Activated CD4-positive, alpha-beta T cell treated with anti-CD3 and anti-CD28 coated beads for 36 hours (primary cell): ENCODE measurements at regions of chr11 and their contacts with region 1.

Region 1: DNA sequence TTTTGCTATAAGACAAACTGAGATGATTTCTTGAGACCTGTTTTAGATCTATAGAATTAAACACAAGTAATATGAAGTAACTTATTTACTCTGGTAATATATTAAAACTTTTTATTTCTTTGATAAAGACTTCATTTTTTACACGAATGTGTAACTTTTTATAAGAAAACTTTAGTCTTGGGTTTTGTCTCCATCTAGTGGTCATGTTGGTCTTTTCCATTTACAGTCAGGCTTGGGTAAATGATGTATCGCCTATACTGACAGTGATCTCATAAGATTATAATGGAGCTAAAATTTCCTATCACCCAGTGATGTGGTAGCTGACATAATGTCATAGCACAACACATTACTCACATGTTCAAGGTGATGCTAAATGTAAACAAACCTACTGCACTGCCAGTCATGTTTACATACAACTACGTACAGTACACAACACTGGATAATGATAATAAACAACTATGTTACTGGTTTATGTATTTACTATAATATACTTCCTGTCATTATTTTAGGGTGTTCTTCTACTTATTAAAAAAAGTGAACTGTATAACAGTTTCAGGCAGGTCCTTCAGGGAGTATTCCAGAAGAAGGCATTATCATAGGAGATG is 7.5 kb upstream of the C11orf97 start:
- DNase-seq: no peak
- ATAC-seq: peak; percentile 72
- H3K4me3 Mint-ChIP-seq: no peak overlapping the region
- H3K27ac Mint-ChIP-seq: no peak overlapping the region
- H3K4me1 Mint-ChIP-seq: no peaks in the 10 kb centered on the region
- H3K27me3 Mint-ChIP-seq: peaks cover 3% of the 10 kb centered on the region

Region 2: DNA sequence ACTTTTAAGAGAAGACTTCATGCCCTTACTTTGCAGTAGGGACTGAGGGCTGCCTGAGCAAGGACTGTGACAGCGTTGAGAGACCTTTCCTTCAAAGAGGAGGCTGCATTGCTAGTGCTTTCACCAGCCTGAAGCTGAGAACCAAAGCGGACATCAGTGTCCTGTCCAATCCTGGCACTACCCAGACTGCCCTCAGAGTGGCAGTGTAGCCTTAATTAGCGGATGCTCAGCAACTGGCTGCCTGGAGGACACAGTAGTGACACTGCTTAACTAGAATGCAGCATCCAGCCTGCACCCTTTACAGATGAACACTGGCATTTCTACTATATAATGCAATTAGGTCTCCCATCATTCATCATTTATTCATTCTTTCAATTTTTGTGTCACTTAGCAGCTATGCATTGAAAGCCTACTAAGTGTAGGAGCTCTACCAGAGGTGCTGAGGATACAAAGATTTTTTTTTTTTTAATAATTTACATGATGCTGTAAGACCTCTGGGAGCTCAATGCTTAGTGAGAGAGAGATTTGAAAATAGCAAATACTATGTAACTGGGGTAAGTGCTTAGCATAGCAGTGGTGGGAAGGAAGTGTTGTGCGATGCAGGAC is 1270.1 kb before region 1 on chr11:
- CTCF ChIA-PET with region 1: no interaction called
- POLR2A ChIA-PET with region 1: no interaction called
- intact Hi-C with region 1: loop called in 1 of 2 experiments (anchors 2 kb)
- DNase-seq: peak; percentile 82
- ATAC-seq: peak; percentile 99
- H3K4me3 Mint-ChIP-seq: no peak overlapping the region
- H3K27ac Mint-ChIP-seq: no peak overlapping the region
- H3K4me1 Mint-ChIP-seq: no peaks in the 10 kb centered on the region
- H3K27me3 Mint-ChIP-seq: peaks cover 9% of the 10 kb centered on the region

Region 3: GRCh38 chr11:93921695-93922468 is 582.9 kb before region 1 on chr11:
- CTCF ChIA-PET with region 1: interaction called, 8 read pairs
- POLR2A ChIA-PET with region 1: no interaction called
- intact Hi-C with region 1: loop called (anchors 1 to 10 kb)
- DNase-seq: peak; percentile 49
- ATAC-seq: peak; percentile 53
- H3K4me3 Mint-ChIP-seq: no peak overlapping the region
- H3K27ac Mint-ChIP-seq: no peak overlapping the region
- H3K4me1 Mint-ChIP-seq: no peaks in the 10 kb centered on the region
- H3K27me3 Mint-ChIP-seq: peaks cover 38% of the 10 kb centered on the region

Region 4: DNA sequence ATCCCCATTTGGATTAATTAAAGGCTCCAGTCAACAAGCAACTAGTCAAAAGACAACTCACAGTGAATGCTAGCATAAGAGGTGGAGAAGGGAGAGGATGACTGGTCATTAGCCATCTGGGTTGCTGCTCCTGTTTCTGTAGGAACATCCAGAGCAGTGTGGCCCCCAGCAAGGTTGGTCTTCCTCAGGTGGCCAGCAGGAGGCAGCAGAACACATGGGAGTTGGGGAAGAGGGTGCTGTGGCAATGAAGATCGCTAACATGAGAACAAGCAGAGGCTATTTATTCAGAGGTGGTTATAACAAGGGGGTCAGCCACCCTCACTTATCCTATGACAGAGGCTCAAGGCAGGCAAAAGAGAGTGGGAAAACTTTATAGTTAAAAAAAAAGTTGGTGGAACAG is 179.1 kb before region 1 on chr11:
- CTCF ChIA-PET with region 1: interaction called, 7 read pairs
- POLR2A ChIA-PET with region 1: no interaction called
- intact Hi-C with region 1: loop called (anchors 1 kb)
- DNase-seq: peak; percentile 69
- ATAC-seq: peak; percentile 47
- H3K4me3 Mint-ChIP-seq: no peak overlapping the region
- H3K27ac Mint-ChIP-seq: no peak overlapping the region
- H3K4me1 Mint-ChIP-seq: no peaks in the 10 kb centered on the region
- H3K27me3 Mint-ChIP-seq: peaks cover 5% of the 10 kb centered on the region